ENCODE measurements at regions of chr6 and their contacts with region 1.

Region 1: GRCh38 chr6:15628499-15629131 is 34.2 kb downstream of the DTNBP1 start:
- DNase-seq: peak; percentile 22
- H3K4me3 Mint-ChIP-seq: no peak overlapping the region
- H3K27ac Mint-ChIP-seq: peak overlapping the region; percentile 40
- H3K4me1 Mint-ChIP-seq: peaks cover 34% of the 10 kb centered on the region
- H3K27me3 Mint-ChIP-seq: no peaks in the 10 kb centered on the region

Region 2: DNA sequence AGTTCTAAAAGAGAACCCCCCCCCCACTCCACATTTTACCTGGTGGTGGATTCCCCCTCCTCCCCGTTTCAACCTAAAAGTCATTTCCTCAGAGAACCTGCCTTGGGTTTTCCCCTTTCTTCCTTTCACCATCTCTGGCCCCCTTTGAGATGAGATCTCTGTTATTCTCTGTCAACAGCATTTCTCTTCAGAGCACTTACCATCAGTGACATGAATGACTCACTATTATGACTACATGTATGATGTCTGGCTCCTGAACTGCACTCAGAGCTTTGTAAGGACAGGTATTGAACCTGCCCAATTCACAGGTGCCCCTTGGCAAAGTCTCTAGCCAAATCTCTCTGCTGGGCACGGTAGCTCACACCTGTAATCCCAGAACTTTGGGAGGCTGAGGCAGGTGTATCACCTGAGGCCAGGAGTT is 444.2 kb before region 1 on chr6:
- intact Hi-C with region 1: loop called (anchors 5 kb)
- DNase-seq: peak; percentile 25
- H3K4me3 Mint-ChIP-seq: no peak overlapping the region
- H3K27ac Mint-ChIP-seq: peak overlapping the region; percentile 94
- H3K4me1 Mint-ChIP-seq: peaks cover 16% of the 10 kb centered on the region
- H3K27me3 Mint-ChIP-seq: no peaks in the 10 kb centered on the region

Region 3: GRCh38 chr6:15254070-15254841 is 374.4 kb before region 1 on chr6:
- intact Hi-C with region 1: loop called (anchors 2 kb)
- DNase-seq: no peak
- H3K4me3 Mint-ChIP-seq: peak overlapping the region; percentile 41
- H3K27ac Mint-ChIP-seq: peak overlapping the region; percentile 92
- H3K4me1 Mint-ChIP-seq: peaks cover 98% of the 10 kb centered on the region
- H3K27me3 Mint-ChIP-seq: no peaks in the 10 kb centered on the region

Region 4: DNA sequence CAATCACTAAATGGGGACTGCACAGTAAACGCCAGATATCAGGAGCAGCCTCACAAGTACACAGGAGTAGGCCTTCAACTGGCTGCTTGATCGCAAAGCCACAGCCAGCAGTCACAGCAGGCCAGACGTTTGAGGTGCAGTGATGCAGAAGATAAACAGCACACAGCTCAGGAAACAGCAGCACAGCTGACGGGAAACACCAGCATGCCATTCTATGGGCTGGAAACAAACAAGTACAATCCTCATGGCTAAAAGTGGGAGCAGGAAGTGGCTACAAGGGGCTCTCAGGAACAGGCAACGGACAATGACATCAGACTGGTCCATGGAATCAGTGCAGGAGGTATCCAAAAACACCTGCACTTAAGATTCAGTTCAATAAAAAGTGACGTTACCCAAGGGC is 76.8 kb before region 1 on chr6:
- intact Hi-C with region 1: no loop called
- DNase-seq: no peak
- H3K4me3 Mint-ChIP-seq: no peak overlapping the region
- H3K27ac Mint-ChIP-seq: no peak overlapping the region
- H3K4me1 Mint-ChIP-seq: no peaks in the 10 kb centered on the region
- H3K27me3 Mint-ChIP-seq: no peaks in the 10 kb centered on the region

Region 5: DNA sequence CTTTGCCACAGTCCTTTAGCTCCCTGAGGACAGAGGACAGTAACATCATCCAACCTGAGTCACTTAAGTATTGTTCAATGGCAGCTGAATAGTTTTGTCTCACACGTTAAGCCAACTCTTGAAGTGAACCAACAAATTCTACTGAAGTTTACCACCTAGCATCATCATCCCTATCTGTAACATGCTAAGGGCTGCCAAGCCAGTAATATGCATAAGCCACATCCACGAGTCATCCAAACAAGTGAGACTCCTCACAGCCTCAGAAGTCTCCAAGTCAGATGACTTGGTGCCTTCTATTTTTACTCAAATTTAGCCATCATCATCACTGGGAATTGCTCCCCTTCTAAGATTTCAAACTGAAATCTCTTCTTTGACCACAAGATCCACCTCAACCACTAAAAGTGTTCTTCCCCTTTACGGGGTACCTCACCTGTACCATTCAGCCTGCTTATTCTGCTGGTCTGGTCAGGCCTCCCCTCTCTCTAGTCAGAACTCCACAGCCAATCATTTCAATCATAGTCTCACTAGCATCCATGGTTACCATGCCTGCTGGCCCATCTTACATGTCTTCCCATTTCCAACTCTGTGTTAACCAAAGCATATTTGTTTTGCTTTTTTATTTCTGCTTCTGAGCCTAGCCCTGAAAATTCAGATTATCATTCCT is 39.5 kb before region 1 on chr6:
- intact Hi-C with region 1: loop called (anchors 1 kb)
- DNase-seq: no peak
- H3K4me3 Mint-ChIP-seq: no peak overlapping the region
- H3K27ac Mint-ChIP-seq: peak overlapping the region; percentile 33
- H3K4me1 Mint-ChIP-seq: peaks cover 24% of the 10 kb centered on the region
- H3K27me3 Mint-ChIP-seq: no peaks in the 10 kb centered on the region

Region 6: DNA sequence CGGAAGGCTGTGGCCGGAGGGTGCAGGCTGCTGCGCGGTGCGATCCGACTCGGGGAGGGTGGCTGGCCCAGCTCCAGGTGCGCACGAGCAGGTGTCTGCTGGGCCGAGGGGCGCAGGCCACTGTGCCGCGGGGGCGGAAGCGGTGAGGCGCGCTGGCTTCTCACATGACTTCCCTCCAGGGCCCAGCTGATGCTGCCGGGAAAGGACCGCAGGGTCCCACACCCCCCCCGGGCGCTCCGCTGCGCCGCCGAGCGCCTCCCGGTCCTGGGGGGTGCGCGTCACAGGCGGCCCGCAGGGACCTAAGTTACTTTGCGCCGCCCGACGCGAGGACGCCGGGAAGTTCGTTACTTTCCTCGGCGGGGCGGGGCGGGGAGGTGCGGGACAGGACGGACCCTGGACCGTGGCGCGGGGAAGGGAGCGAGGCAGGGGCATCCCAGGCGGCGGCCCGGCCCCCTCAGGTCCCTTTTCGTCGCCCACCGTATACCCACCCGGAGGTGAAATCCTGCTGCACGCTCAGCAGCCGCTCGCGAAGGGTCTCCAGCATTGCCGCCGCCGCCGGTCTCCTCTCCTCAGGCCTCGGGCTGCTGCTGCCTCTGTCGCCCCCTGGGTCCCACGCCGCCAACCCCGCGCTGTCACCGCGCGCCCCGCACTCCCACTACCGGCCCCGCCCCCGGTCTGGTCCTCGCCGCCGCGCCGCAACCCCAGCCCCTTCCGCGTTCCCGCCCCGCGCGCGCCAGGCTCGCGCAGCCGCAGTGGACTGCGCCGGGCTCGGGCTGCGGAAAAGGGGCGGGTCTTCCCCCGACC is 33.9 kb after region 1 on chr6 and contains the start of gene DTNBP1:
- intact Hi-C with region 1: loop called (anchors 2 kb)
- DNase-seq: peak; percentile 85
- H3K4me3 Mint-ChIP-seq: peak within 1 kb of the TSS; percentile 81
- H3K27ac Mint-ChIP-seq: peak within 1 kb of the TSS; percentile 77
- H3K4me1 Mint-ChIP-seq: peaks cover 24% of the 10 kb centered on the region
- H3K27me3 Mint-ChIP-seq: peaks cover 14% of the 10 kb centered on the region
- total RNA-seq, gene DTNBP1: 17.2 and 19.2 TPM in 2 replicates